Activated CD4-positive, alpha-beta T cell treated with anti-CD3 and anti-CD28 coated beads, Interleukin-2, amount 10 ng/mL, durations not matched to agents 7 days and 5 days (primary cell): ENCODE measurements at regions of chr14 and their contacts with region 1.

Region 1: DNA sequence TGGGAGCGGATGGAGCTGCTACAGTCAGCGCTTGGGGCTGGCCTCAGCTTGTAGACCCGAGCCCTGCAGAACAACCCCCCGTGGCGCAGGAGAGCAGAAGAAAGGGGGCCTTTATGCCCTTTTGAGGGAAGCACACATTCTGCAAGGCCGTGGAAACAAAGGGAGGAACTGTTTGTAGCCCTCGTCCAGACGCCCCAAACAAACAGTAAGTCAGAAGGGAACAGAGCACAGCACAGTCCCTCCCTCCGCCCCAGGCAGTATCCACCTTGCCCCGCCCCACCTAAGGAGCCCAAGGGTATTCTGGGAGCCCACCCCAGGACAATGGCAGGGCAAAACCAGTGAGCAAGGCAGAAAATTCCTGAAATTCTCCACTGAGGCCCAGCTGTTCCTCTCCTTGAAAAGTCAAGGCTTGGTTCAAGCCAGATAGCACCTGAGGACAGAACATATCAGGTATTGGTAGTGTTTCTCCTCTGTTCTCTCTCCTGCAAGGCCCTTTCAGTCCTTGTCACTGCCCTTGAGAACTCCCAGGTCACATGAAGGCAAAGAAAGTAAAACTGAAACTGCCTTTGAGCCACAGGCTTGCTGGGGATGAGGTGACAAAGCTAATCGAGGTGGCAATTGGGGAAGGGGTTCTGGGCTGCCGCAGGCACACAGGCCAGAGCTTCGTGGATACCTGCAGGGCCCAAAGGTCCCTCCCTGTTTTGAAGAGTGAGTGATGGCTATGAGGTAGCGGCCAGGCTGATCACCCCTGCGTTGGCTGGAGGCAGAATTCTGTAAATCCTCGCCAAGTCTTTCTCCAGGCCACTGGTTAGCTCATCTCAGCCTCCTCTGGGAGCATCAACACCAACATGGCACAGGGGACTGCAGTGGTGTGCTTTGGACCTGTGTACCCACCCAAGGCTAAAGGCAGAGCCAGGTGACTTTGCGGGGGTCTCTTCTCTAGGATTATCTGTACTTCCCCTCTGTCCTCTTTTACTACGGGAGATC is 499 bp downstream of the DGLUCY start:
- DNase-seq: peak; percentile 84
- H3K4me3 Mint-ChIP-seq: peak overlapping the region; percentile 82
- H3K27ac Mint-ChIP-seq: peak overlapping the region; percentile 90
- H3K4me1 Mint-ChIP-seq: peaks cover 64% of the 10 kb centered on the region
- H3K27me3 Mint-ChIP-seq: no peaks in the 10 kb centered on the region

Region 2: DNA sequence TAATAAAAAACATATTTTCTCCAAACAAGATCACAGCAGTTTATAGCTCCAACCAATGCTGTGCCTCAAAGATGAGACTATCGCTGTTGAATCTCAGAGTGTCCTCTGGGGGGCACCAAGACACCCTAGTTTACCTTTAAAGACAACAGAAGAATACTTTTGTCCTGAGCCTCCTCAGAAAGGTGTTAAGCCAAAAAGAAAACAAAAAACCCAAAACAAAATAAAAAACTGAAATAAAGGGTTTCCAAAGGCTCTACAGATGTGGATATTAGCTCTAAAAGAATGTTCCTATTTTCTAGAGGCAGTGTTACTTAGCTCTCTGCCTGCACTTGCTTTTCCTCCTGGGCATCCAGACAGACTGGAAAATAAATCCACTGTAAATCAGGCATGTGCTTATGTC is 211.3 kb before region 1 on chr14:
- CTCF ChIA-PET with region 1: interaction called, 14 read pairs
- POLR2A ChIA-PET with region 1: no interaction called
- DNase-seq: peak; percentile 76
- H3K4me3 Mint-ChIP-seq: no peak overlapping the region
- H3K27ac Mint-ChIP-seq: no peak overlapping the region
- H3K4me1 Mint-ChIP-seq: peaks cover 26% of the 10 kb centered on the region
- H3K27me3 Mint-ChIP-seq: no peaks in the 10 kb centered on the region

Region 3: GRCh38 chr14:91048265-91048664 is 66.1 kb before region 1 on chr14:
- CTCF ChIA-PET with region 1: no interaction called
- POLR2A ChIA-PET with region 1: no interaction called
- DNase-seq: no peak
- H3K4me3 Mint-ChIP-seq: no peak overlapping the region
- H3K27ac Mint-ChIP-seq: no peak overlapping the region
- H3K4me1 Mint-ChIP-seq: peaks cover 41% of the 10 kb centered on the region
- H3K27me3 Mint-ChIP-seq: no peaks in the 10 kb centered on the region

Region 4: DNA sequence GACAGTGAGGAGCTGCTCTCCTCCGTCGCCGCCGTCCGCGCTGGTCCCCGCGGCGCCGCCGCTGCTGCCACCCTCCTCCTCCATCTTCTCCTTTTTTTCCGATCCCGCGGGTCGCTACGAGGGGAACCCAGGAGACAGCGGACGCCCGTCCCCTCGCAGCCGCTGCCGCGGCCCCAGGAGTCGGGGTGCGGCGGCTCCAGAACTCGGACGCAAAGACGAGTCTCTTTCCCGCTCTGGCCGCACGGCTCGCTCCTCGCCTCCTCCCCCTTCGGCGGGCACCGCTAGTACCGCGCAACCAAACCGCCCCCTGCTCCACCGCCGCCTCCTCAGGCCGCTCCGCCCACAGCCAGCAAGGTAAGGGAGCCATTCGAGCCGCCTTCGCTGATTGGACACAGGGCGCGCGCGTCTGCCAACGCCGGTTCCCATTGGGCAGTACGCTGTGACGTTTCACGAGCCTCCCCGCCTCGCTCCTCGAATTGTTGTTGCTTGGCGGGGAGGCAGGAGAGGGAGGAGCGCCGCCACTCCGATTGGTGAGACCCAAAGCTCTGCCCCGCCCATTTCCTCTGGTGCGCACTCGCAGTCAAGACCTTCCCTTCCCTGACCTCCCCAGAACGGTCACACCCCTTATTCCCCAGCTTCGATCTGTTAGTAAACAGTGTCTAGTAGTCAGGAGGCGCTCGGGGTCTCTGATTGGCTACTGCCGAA is 53.9 kb before region 1 on chr14 and contains the start of gene RPS6KA5:
- CTCF ChIA-PET with region 1: interaction called, 11 read pairs
- POLR2A ChIA-PET with region 1: interaction called, 30 read pairs
- DNase-seq: peak; percentile 100
- H3K4me3 Mint-ChIP-seq: peak within 1 kb of the TSS; percentile 89
- H3K27ac Mint-ChIP-seq: peak within 1 kb of the TSS; percentile 87
- H3K4me1 Mint-ChIP-seq: peaks cover 62% of the 10 kb centered on the region
- H3K27me3 Mint-ChIP-seq: no peaks in the 10 kb centered on the region
- total RNA-seq, gene RPS6KA5: 42.1 to 44.8 TPM

Region 5: GRCh38 chr14:91098591-91098990 is 15.8 kb before region 1 on chr14:
- CTCF ChIA-PET with region 1: interaction called, 17 read pairs
- POLR2A ChIA-PET with region 1: no interaction called
- DNase-seq: no peak
- H3K4me3 Mint-ChIP-seq: no peak overlapping the region
- H3K27ac Mint-ChIP-seq: no peak overlapping the region
- H3K4me1 Mint-ChIP-seq: peaks cover 9% of the 10 kb centered on the region
- H3K27me3 Mint-ChIP-seq: no peaks in the 10 kb centered on the region